Right lobe of liver (tissue), 6 donors: ENCODE measurements at regions of chr2 and their contacts with region 1.

Region 1: DNA sequence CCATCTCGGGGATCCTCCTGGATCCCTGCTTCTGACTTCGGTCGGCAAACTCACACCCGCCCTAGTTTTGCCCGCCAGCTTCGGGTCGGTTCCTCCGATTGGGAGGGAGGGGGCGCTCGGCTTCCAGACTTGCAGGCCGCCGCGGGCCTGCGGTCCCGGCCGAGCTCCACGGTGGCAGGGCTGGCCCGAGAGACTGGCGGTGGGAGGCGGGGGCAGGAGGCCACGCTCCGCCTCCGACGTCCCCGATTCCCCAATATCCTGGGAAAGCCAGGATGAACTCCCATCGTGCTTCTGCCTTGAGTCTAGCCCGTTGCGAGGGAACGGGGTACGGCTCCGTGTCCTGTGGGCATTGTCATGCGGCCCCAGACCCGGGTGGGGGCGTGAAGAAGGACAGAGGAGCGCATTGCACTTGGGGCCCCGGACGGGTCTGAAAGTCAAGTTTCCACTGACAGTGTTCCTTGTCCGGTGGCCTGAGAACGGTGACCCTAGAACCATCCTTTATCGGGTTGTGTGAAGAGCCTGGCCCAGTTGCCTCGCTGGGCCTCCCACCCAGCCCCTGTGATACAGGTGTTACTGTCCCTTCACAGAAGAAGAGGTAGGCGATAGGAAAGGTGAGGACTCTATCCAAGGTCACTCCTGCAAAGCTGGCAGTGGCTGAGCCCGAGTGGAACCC is 2.4 kb upstream of the INHBB start:
- DNase-seq: peak; percentile 85 to 92 (median 91)
- ATAC-seq: peak; percentile 81 to 85 (median 84)
- H3K4me3 ChIP-seq: peak overlapping the region; percentile 13 to 58 (median 56)
- H3K27ac ChIP-seq: peak overlapping the region in 1 of 3 donors; percentile 88
- H3K4me1 ChIP-seq: peaks cover 0 to 45% (median 8%) of the 10 kb centered on the region in 4 donors
- H3K27me3 ChIP-seq: no peaks in the 10 kb centered on the region
- CTCF ChIP-seq: peak; percentile 82 to 90 (median 90)
- POLR2A ChIP-seq: peak; percentile 48

Region 2: DNA sequence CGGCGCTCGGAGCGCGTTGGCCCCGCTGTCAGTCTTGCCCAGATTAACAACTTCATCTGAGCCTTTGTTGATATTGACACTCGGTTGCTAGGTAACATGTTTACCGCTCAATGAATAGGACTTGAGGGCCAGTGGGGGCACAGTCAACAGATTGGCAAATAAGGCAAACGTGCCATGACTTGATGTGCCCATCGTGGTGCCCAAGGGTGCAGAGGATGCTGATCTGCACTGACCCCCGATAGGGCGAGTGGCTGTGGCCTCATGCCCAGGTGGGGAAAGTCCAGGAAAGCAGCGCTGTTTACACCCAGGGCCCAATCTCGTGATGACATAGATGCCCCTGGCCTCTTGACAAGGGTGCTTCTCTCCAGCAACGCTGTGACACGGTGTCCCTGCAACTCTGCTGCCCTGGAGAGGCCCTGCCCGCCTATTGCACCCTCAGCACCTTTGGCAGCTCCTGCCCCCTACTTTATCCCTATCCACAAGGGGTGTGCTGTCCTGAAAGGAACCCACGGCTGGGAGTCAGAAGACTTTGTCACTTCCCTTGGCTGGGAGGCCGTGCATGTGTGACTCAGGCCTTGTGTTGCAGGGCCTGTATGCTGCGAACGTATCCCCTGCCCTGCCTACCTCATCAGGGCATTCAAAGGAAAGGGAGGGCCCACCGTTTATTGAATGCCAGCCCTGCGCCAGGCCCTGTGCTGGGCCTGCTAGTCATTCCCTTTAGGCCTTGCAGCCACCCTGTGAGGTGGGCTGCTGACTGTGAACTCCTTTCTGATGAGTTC is 160.4 kb after region 1 on chr2:
- intact Hi-C with region 1: loop called in 1 of 2 experiments (anchors 10 kb)
- DNase-seq: peak; percentile 91 to 98 (median 97)
- ATAC-seq: peak; percentile 84 to 94 (median 90)
- H3K4me3 ChIP-seq: no peak overlapping the region
- H3K27ac ChIP-seq: peak overlapping the region; percentile 60 to 84 (median 76)
- H3K4me1 ChIP-seq: peaks cover 0 to 25% (median 8%) of the 10 kb centered on the region in 4 donors
- H3K27me3 ChIP-seq: no peaks in the 10 kb centered on the region
- CTCF ChIP-seq: peak; percentile 20 to 38 (median 32)
- POLR2A ChIP-seq: peak; percentile 45